ENCODE measurements at regions of chr5 and their contacts with region 1.

Region 1: DNA sequence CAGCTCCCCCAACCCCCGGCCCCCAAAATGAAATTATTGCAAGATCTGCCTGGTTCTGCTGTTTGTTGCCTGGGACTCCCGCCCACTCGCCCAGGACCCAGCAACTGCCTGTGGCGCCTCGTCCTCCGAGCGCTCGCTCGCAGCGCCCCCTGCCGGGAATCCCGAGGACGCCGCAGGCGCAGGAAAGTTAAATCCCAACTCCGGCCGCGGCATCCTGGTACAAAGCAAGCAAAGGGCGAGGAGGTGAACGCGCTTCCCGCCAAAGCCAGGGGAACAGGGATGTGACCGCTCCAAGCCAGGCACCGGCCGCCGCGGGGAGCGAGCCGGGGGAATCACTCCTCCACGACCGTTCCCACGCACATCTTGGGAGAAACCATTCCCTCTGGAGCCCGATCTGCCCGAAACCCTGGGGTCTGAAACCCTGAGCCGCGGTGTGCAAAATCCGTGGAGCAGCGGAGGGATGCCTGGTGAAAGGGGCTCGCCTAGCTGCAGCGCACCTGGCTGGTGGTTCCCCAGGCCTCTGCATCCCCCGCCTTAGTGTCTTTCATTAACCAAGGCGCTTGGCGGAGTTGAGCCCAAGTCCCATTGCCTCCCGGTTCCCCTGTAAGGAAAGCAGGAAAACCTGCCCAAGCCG is 1.3 kb downstream of the SEMA5A start:
- DNase-seq: peak; percentile 27
- ATAC-seq: peak; percentile 92
- H3K4me3 ChIP-seq: peak overlapping the region; percentile 36 to 44
- H3K27ac ChIP-seq: no peak overlapping the region
- H3K4me1 ChIP-seq: peaks cover 9% of the 10 kb centered on the region
- H3K27me3 ChIP-seq: peaks cover 22% of the 10 kb centered on the region
- CTCF ChIP-seq: peak; percentile 97

Region 2: DNA sequence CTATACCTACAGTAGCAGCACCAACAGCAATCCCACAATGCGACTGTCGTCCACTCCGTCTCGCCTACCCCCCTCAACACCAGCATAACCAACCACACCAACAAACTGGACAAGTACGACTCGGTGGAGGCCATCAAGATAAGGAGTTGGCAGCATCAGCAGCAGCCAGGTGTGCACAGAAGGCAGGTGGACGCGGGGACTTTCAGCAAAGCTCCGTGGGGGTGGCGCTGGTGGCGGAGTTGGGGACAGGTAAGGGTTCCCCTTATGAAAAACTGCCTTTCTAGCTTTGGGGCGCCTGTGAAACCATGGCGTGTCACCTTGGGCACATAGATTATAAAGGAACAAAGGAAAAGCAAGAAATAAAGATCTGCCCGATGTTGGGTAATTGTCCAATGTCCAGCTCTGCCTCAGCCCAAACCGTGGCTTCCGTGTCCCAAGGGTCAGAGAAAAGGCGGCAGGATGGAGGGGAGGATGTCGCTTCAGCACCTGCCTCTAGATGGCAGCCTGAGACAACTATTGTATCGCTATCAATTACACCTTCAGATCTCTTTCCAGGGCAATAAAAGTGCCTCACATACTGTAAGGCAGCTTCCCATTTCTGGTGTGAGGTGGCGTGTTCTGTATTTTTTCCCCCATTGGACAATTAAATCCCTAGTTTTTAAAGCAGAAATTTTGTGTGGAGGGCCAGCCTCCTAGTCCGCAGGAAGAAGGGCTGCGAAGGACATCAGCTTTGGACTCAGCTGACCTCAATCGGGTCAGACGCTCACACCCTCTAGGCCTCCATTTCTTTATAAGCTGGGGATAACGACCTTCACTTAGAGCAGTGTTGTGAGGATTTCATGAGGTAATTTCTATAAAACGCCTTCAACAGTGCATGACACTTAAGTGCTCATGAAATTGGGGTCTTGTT is 1616.9 kb before region 1 on chr5:
- CTCF ChIA-PET with region 1: no interaction called
- POLR2A ChIA-PET with region 1: no interaction called
- in situ Hi-C with region 1: loop called (anchors 25 kb)
- intact Hi-C with region 1: no loop called
- DNase-seq: peak; percentile 48
- ATAC-seq: peak; percentile 95
- H3K4me3 ChIP-seq: no peak overlapping the region
- H3K27ac ChIP-seq: no peak overlapping the region
- H3K4me1 ChIP-seq: no peaks in the 10 kb centered on the region
- H3K27me3 ChIP-seq: no peaks in the 10 kb centered on the region; the same call in 1 of the 2 replicates
- CTCF ChIP-seq: peak; percentile 85

Region 3: GRCh38 chr5:9498541-9499497 is 45.8 kb before region 1 on chr5:
- CTCF ChIA-PET with region 1: no interaction called
- POLR2A ChIA-PET with region 1: no interaction called
- in situ Hi-C with region 1: no loop called
- intact Hi-C with region 1: no loop called
- DNase-seq: no peak
- ATAC-seq: no peak
- H3K4me3 ChIP-seq: no peak overlapping the region
- H3K27ac ChIP-seq: no peak overlapping the region
- H3K4me1 ChIP-seq: no peaks in the 10 kb centered on the region
- H3K27me3 ChIP-seq: no peaks in the 10 kb centered on the region
- CTCF ChIP-seq: peak; percentile 42

Region 4: GRCh38 chr5:9562141-9562540 is 17.5 kb after region 1 on chr5:
- CTCF ChIA-PET with region 1: no interaction called
- POLR2A ChIA-PET with region 1: no interaction called
- in situ Hi-C with region 1: no loop called
- intact Hi-C with region 1: no loop called
- DNase-seq: no peak
- ATAC-seq: no peak; the same call in 1 of the 2 replicates
- H3K4me3 ChIP-seq: no peak overlapping the region
- H3K27ac ChIP-seq: no peak overlapping the region
- H3K4me1 ChIP-seq: no peaks in the 10 kb centered on the region
- H3K27me3 ChIP-seq: no peaks in the 10 kb centered on the region; the same call in 1 of the 2 replicates
- CTCF ChIP-seq: no peak